KBM-7 (cell line): ENCODE measurements at regions of chr3 and their contacts with region 1.

Region 1: GRCh38 chr3:157081681-157082210 is 78.2 kb downstream of the CCNL1 start:
- DNase-seq: peak; percentile 87

Region 2: GRCh38 chr3:156535162-156535627 is 546.6 kb before region 1 on chr3:
- in situ Hi-C with region 1: loop called (anchors 25 kb)
- DNase-seq: peak; percentile 50

Region 3: DNA sequence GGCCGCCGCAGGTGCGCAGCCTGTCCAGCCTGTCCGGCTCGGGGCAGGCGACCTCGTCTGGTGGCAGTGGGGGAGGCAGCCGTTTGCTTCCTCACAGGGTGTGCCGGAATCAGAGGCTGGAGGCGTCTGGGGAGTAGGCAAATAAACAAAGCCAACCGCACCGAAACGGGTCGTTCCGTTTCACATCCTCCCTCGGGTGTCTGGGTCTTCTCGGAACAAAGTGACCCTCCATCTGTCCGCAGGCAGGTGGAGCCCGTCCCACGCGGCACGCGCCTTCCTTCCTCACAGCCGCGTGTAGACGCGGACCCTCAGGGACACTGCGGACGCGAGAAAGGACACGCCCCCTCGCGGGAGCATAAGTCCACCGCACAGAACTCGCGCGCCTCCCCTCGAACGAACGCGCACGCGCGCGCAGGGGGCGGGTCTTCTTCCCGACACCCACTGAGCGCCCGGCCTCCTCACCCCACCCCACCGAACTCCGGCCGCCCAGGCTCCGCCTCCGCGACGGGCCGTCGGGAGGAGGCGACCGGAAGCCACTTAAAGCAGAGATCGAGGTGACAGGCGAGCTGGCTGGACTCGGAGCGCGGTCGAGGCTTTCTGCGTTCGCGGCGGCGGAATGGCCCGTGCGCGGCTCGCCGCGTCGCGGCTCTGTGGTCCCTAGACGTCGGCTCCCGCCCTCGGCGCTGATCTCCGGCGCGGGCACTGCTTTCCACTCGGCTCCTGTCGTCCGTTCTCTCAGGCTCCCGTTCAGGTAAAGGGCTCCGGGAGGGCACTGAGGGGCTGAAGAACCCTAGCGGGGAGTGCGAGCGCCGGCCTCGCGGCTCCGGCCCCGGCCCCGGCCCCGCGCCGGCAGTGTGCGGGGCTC is 407.5 kb before region 1 on chr3 and contains the start of gene TIPARP:
- in situ Hi-C with region 1: loop called (anchors 10 kb)
- DNase-seq: peak; percentile 99